Motor neuron (in vitro differentiated cells): ENCODE measurements at regions of chr15 and their contacts with region 1.

Region 1: DNA sequence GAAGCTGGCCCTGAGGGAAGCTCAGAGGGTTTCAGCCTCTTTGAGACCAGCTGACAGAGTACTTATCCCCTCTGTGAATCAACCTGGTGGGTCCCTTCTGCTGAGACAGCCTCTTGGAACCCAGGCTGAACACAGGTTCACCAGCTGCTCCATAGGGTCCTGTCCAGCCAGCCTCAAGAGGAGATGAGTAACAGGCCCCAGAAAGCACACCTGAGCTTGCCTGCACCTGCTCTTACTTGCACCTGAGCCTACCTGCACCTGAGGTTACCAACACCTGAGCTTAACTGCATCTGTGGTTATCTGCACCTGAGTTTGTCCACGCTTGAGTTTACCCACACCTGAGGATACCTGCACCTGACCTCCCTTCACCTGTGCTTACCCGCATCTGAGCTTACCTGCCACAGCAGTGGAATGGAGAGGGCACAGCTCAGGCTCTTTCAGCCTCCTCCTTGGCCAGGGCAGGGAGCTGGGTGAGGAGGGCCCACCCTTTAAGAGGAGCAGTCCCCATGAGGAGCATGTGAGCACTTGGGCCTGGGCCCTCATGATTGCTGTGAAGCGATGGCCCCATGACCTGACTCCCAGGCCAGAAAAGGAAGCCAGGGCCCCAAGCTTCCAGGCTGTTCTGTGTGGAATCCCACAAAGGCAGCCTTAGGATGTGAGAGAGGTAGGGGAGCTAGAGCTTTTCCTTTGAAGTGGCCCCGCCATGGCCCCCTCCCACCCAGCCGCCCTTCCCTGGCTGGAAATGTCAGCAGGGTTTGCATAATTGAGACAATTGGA is at the start of gene TRPM1:
- ATAC-seq: peak in 1 of 8 experiments; percentile 6
- H3K4me3 ChIP-seq: no peak within 1 kb of the TSS
- H3K27ac ChIP-seq: no peak within 1 kb of the TSS
- H3K4me1 ChIP-seq: peaks cover 10 to 15% of the 10 kb centered on the region in 2 donors
- total RNA-seq, gene TRPM1: 0.11 to 2.7 (median 0.62) TPM in 7 of 8 experiments, not detected in the other

Region 2: DNA sequence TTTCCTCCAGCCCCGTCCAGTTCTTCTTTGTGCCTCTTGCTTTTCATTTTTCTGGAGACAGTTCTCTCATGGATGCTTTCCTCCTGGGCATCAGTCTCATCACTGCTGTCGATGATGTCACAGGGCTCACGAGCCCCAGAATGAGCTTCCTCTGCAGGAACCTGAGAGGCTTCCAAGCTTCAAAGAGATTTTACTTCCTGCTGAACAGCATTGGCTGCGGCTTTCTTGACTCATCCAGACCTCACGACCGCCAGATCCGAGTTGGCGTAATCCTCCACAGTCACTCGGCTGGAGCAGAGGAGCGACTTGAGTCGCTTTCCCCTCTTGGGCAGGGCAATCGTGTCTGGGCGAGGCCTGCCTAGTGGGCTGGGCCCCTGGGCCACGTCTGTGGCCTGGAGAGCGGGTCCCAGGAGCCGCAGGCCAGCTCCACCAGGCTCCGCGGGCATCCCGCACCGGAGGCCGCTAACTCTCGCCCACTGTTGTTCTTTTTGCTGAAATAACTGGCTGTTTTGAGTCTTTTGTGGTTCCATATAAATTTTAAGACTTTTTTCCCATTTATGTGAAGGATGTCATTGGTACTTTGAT is 218.5 kb before region 1 on chr15:
- in situ Hi-C with region 1: no loop called
- ATAC-seq: peak in 2 of 8 experiments; percentile 62 to 70
- H3K4me3 ChIP-seq: no peak overlapping the region
- H3K27ac ChIP-seq: no peak overlapping the region
- H3K4me1 ChIP-seq: no peaks in the 10 kb centered on the region

Region 3: DNA sequence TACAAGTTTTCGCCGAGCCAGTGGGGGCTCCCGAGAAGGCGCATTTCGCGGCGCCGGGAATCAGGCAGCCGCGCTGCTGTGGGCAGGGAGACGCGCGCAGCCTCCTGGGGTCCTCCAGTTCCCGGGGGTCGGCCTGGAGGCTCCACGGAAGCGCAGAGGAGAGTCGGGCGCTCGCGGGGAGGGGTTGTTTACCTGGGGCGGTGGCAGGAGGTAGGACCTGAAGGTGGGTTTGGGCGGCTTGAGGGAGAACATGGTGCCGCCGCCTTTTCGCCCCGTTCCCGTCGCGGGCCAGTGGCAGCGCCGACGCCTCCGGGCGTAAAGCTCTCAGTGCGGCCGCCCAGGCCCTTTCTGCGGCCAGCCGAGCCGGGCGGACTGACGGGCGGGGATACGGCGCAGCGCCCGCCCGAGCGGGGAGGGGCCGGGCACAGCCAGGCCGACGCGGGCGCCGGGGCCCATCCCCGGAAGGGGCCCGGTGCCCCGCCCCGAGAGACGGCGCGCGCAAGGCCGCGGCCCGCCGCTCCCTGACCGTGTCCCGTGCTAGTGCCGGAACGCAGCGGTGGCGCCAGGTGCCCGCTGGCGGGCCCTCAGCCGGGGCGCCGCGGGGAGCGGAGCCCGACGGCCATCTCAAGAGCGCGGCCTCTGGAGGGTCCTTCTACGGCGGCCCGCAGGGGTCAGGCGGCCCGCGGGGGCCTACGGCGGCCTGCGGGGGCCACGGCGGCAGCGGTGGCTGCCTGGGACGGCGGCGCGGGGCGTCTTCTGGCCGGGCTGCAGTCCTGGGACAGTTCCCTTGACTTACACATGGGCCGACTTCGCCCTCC is 110.0 kb before region 1 on chr15 and contains the start of gene MTMR10:
- in situ Hi-C with region 1: loop called in 2 of 9 experiments (anchors 10 to 25 kb)
- ATAC-seq: peak; percentile 90 to 94 (median 91)
- H3K4me3 ChIP-seq: peak within 1 kb of the TSS; percentile 54 to 94 (median 56)
- H3K27ac ChIP-seq: peak within 1 kb of the TSS; percentile 67 to 88
- H3K4me1 ChIP-seq: peaks cover 4 to 14% of the 10 kb centered on the region in 2 donors
- total RNA-seq, gene MTMR10: 6.5 to 68.7 (median 14.7) TPM

Region 4: DNA sequence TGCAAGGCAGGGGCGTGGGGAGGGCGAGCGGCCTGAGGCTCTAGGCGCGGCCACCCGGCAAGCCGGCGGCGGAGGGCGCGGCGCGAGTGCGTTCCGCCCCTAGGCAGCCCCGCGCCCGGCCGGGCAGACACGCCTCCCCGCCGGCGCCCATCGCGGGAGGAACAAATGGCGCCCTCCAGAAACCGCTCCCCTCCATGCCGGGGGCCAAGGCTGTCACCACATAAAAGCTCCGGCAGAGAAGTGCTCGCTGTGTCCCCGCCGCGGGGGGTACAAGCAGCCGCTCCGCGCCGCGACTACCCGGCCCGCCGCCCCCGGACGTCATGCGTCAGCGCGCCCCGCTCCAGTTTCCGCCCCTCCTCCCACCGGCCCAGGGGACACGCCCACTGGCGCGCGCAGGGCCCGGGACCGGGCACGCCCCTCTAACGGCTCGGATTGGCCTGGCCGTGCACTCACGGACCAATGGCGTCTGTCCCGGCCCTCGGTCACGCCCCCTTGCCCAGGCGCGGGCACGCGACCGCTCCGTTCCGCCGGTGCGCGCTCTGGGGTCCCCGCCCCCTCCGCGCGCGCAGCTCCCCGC is 224.8 kb after region 1 on chr15:
- in situ Hi-C with region 1: no loop called
- ATAC-seq: peak; percentile 53 to 83 (median 80)
- H3K4me3 ChIP-seq: peak overlapping the region; percentile 55 to 79 (median 65)
- H3K27ac ChIP-seq: peak overlapping the region; percentile 94 to 96
- H3K4me1 ChIP-seq: peaks cover 21 to 27% of the 10 kb centered on the region in 2 donors